ENCODE measurements at regions of chr7 and their contacts with region 1.

Region 1: DNA sequence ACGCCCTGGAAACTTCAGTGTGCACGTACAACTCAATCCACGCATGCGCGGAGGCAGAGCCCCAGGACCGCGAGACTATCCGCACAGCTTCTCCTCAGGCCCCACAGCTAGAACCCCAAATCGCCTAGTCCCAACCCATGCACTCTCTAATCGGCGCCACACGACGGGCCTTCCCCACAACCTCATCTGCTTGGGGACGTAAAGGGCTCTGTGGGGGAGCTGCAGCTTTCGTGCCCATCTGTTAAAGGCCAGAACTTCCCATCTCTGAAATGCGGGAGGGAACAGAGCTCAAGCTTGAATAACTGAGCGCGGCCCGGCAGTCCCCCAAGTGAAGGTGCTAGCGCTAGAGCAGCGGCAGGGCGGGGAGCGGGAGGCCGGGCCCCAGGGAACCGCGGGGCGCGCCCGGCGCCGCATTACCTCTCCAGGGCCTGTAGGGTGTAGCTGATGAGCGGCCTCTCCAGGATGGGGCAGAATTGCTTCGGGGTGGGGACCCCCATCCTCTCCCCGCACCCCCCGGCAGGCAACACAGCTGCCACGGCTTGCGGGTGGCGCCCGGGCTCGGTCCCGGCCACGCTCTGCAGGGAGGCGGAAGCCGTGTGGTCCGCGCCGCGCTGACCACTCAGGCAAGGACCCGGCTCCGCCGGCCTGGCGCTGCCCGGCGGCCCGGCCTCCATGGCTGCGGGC is 547 bp downstream of the CRPPA start:
- DNase-seq: peak; percentile 46 to 95 (median 82)
- ATAC-seq: peak; percentile 92
- H3K4me3 ChIP-seq: peak overlapping the region; percentile 67 to 71
- H3K4me3 Mint-ChIP-seq: peak overlapping the region; percentile 87
- H3K27ac ChIP-seq: peak overlapping the region; percentile 68 to 89
- H3K27ac Mint-ChIP-seq: peak overlapping the region; percentile 93
- H3K4me1 ChIP-seq: peaks cover 15% of the 10 kb centered on the region
- H3K4me1 Mint-ChIP-seq: peaks cover 29% of the 10 kb centered on the region
- H3K27me3 ChIP-seq: no peaks in the 10 kb centered on the region
- H3K27me3 Mint-ChIP-seq: no peaks in the 10 kb centered on the region
- CTCF ChIP-seq: no peak

Region 2: GRCh38 chr7:16244469-16244868 is 176.3 kb before region 1 on chr7:
- CTCF ChIA-PET with region 1: no interaction called
- POLR2A ChIA-PET with region 1: no interaction called
- intact Hi-C with region 1: no loop called
- DNase-seq: no peak
- ATAC-seq: no peak
- H3K4me3 ChIP-seq: no peak overlapping the region
- H3K4me3 Mint-ChIP-seq: no peak overlapping the region
- H3K27ac ChIP-seq: no peak overlapping the region
- H3K27ac Mint-ChIP-seq: no peak overlapping the region
- H3K4me1 ChIP-seq: no peaks in the 10 kb centered on the region
- H3K4me1 Mint-ChIP-seq: no peaks in the 10 kb centered on the region
- H3K27me3 ChIP-seq: no peaks in the 10 kb centered on the region
- H3K27me3 Mint-ChIP-seq: no peaks in the 10 kb centered on the region
- CTCF ChIP-seq: no peak

Region 3: DNA sequence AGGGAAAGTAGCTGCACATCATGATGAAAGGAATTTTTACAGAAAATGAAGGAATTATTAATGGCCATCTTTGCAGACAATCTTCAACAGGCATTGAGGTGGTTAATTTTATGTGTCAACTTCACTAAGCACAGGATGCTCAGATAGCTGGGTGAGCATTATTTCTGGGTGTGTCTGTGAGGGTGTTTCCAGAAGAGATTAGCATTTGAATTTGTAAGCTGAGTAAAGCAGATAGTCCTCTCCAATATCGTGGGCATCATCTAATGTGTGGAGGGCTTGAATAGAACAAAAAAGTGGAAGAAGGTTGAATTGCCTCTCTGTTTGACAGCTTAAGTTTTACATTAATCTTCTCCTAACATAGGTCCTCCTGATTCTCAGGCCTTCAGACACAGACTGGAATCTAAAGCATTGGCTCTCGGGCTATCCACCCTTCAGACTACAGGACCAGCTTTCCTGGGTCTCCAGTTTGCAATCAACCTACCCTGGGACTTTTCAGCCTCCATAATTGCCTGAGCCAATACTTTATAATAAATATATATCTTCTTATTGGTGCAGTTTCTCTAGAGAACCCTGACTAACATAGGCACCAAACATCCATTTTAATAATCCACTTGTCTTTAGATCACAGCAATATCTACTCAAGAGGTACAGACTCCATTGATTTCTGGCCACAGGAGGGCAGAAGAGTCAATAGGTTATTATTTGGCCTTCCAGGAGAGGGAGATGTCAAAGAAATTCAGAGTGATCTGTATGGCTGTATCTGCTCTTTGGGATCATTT is 11.0 kb after region 1 on chr7:
- CTCF ChIA-PET with region 1: interaction called, 11 read pairs
- POLR2A ChIA-PET with region 1: interaction called, 4 read pairs
- intact Hi-C with region 1: no loop called
- DNase-seq: peak in 4 of 9 experiments; percentile 20 to 68 (median 44)
- ATAC-seq: peak; percentile 83
- H3K4me3 ChIP-seq: no peak overlapping the region
- H3K4me3 Mint-ChIP-seq: no peak overlapping the region
- H3K27ac ChIP-seq: no peak overlapping the region
- H3K27ac Mint-ChIP-seq: no peak overlapping the region
- H3K4me1 ChIP-seq: no peaks in the 10 kb centered on the region
- H3K4me1 Mint-ChIP-seq: no peaks in the 10 kb centered on the region
- H3K27me3 ChIP-seq: no peaks in the 10 kb centered on the region
- H3K27me3 Mint-ChIP-seq: peaks cover 3% of the 10 kb centered on the region
- CTCF ChIP-seq: peak; percentile 37

Region 4: GRCh38 chr7:16447876-16448275 is 27.1 kb after region 1 on chr7:
- CTCF ChIA-PET with region 1: no interaction called
- POLR2A ChIA-PET with region 1: no interaction called
- intact Hi-C with region 1: no loop called
- DNase-seq: no peak
- ATAC-seq: no peak
- H3K4me3 ChIP-seq: no peak overlapping the region
- H3K4me3 Mint-ChIP-seq: no peak overlapping the region
- H3K27ac ChIP-seq: no peak overlapping the region
- H3K27ac Mint-ChIP-seq: no peak overlapping the region
- H3K4me1 ChIP-seq: no peaks in the 10 kb centered on the region
- H3K4me1 Mint-ChIP-seq: no peaks in the 10 kb centered on the region
- H3K27me3 ChIP-seq: no peaks in the 10 kb centered on the region
- H3K27me3 Mint-ChIP-seq: no peaks in the 10 kb centered on the region
- CTCF ChIP-seq: no peak

Measured in CD8-positive, alpha-beta T cell (primary cell).